B cell (primary cell): ENCODE measurements at regions of chr3 and their contacts with region 1.

Region 1: DNA sequence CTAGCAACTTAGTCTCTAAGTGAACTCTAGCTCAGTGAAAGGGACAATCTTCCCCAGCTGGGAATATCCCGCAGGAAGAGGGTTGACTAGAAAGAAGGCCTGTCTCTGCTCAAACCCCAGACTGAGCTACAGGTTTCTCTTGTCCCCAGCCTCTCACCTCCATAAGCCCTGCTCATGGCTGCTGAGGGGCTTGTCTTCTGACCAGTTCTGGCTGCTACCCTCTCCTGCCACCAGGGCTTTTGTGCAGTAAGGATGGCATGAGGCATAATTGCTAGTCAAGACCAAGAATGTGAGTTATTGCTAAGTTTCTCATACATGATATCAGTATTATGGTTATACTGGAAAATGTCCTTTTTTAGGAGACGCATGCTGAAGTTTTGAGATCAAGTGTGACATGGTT is 21.3 kb downstream of the WDR53 start:
- DNase-seq: no peak
- ATAC-seq: no peak
- H3K4me3 ChIP-seq: no peak overlapping the region
- H3K4me3 Mint-ChIP-seq: no peak overlapping the region
- H3K27ac ChIP-seq: no peak overlapping the region
- H3K27ac Mint-ChIP-seq: no peak overlapping the region
- H3K4me1 ChIP-seq: no peaks in the 10 kb centered on the region
- H3K4me1 Mint-ChIP-seq: no peaks in the 10 kb centered on the region
- H3K27me3 ChIP-seq: no peaks in the 10 kb centered on the region
- H3K27me3 Mint-ChIP-seq: no peaks in the 10 kb centered on the region
- CTCF ChIP-seq: no peak

Region 2: DNA sequence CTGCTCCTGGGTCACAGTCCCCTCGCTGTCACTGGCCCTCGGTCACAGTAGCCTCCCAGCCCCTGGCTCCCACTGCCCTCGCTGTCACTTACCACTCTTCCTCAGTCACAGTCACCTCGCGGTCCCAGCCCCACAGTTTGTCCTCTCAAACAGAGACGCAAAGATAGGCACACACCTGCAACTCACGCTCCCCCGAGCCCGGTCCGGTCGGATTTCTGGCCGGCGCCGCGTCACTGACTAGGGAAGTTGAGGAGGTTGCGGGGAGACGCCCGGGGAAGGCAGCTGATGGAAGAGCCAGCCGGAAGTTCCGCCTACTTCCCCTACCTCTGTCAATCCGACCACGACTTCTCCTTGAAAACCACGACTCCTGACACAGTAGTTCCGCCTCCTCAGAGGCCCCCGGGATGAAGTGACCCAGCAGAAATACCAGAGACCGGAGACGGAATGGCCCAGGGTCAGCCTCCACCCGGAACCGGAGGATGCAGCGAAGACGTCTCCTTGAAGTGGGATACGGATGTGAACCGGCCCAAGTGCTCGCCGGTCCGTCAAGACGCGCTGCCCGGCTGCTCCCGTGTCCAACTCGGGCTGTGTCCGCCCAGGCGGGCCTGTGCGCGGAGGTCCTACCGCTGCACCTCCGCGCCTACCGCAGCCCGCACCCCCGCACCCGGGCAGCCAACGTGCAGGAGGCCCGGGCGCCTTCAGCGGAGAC is 259.5 kb before region 1 on chr3 and contains the start of gene PCYT1A:
- CTCF ChIA-PET with region 1: no interaction called
- POLR2A ChIA-PET with region 1: no interaction called
- intact Hi-C with region 1: no loop called
- DNase-seq: peak; percentile 87
- ATAC-seq: peak; percentile 78
- H3K4me3 ChIP-seq: peak within 1 kb of the TSS; percentile 68 to 98 (median 96)
- H3K4me3 Mint-ChIP-seq: peak within 1 kb of the TSS; percentile 100
- H3K27ac ChIP-seq: peak within 1 kb of the TSS; percentile 70 to 92
- H3K27ac Mint-ChIP-seq: peak within 1 kb of the TSS; percentile 98
- H3K4me1 ChIP-seq: peaks cover 17 to 36% of the 10 kb centered on the region in 2 donors
- H3K4me1 Mint-ChIP-seq: peaks cover 58% of the 10 kb centered on the region
- H3K27me3 ChIP-seq: no peaks in the 10 kb centered on the region
- H3K27me3 Mint-ChIP-seq: no peaks in the 10 kb centered on the region
- CTCF ChIP-seq: no peak
- total RNA-seq, gene PCYT1A: 59.9 and 61.2 TPM in 2 replicates

Region 3: DNA sequence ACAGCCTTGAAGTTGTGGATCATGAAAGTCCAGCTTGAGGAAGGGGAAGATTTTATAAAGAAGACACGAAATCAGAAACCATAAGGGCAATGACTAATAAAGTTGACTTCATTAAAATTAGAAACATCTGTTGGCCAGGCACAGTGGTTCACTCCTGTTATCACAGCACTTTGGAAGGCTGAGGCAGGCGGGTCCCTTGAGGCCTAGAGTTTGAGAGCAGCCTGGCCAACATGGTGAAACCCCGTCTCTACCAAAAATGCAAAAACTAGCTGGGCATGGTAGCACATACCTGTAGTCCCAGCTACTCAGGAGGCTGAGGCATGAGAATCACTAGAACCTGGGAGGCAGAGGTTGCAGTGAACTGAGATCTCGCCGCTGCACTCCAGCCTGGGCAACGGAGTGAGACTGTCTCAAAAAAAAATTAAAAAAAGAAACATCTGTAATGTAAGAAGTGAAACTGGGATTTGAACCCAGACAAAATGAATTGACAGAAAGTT is 107.0 kb before region 1 on chr3:
- CTCF ChIA-PET with region 1: no interaction called
- POLR2A ChIA-PET with region 1: interaction called, 13 read pairs
- intact Hi-C with region 1: no loop called
- DNase-seq: no peak
- ATAC-seq: no peak
- H3K4me3 ChIP-seq: no peak overlapping the region
- H3K4me3 Mint-ChIP-seq: no peak overlapping the region
- H3K27ac ChIP-seq: no peak overlapping the region
- H3K27ac Mint-ChIP-seq: no peak overlapping the region
- H3K4me1 ChIP-seq: no peaks in the 10 kb centered on the region
- H3K4me1 Mint-ChIP-seq: peaks cover 19% of the 10 kb centered on the region
- H3K27me3 ChIP-seq: no peaks in the 10 kb centered on the region
- H3K27me3 Mint-ChIP-seq: no peaks in the 10 kb centered on the region
- CTCF ChIP-seq: no peak

Region 4: GRCh38 chr3:196489747-196490146 is 57.3 kb before region 1 on chr3:
- CTCF ChIA-PET with region 1: no interaction called
- POLR2A ChIA-PET with region 1: no interaction called
- intact Hi-C with region 1: no loop called
- DNase-seq: no peak
- ATAC-seq: no peak
- H3K4me3 ChIP-seq: no peak overlapping the region
- H3K4me3 Mint-ChIP-seq: no peak overlapping the region
- H3K27ac ChIP-seq: no peak overlapping the region
- H3K27ac Mint-ChIP-seq: no peak overlapping the region
- H3K4me1 ChIP-seq: no peaks in the 10 kb centered on the region
- H3K4me1 Mint-ChIP-seq: peaks cover 7% of the 10 kb centered on the region
- H3K27me3 ChIP-seq: no peaks in the 10 kb centered on the region
- H3K27me3 Mint-ChIP-seq: no peaks in the 10 kb centered on the region
- CTCF ChIP-seq: no peak